Activated CD4-positive, alpha-beta memory T cell treated with anti-CD3 and anti-CD28 coated beads for 36 hours (primary cell): ENCODE measurements at regions of chr6 and their contacts with region 1.

Region 1: GRCh38 chr6:110537208-110538123 is 61.1 kb upstream of the SLC22A16 start:
- DNase-seq: no peak
- H3K4me3 Mint-ChIP-seq: no peak overlapping the region
- H3K27ac Mint-ChIP-seq: peak overlapping the region; percentile 15
- H3K4me1 Mint-ChIP-seq: peaks cover 41% of the 10 kb centered on the region
- H3K27me3 Mint-ChIP-seq: no peaks in the 10 kb centered on the region

Region 2: DNA sequence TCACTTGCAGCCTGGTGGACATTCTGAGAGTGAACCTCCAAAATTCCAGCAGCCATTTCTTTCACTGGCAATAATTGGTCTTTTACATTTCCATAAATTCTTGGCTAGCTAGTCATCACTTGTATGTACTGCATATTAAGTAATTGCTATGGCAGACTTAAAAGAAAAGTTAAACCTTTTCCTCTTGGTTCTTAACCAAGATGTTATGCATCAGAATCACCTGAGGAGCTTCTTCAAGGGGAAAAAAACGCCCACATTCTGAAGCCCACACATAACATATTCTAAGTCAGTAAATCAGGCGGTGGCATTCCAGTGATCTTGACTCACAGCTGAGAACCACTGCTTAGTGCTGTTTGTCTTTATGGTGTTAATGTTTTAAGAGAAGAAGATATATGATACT is 320.2 kb before region 1 on chr6:
- CTCF ChIA-PET with region 1: no interaction called
- POLR2A ChIA-PET with region 1: no interaction called
- intact Hi-C with region 1: no loop called
- DNase-seq: no peak
- H3K4me3 Mint-ChIP-seq: no peak overlapping the region
- H3K27ac Mint-ChIP-seq: no peak overlapping the region
- H3K4me1 Mint-ChIP-seq: no peaks in the 10 kb centered on the region
- H3K27me3 Mint-ChIP-seq: no peaks in the 10 kb centered on the region

Region 3: DNA sequence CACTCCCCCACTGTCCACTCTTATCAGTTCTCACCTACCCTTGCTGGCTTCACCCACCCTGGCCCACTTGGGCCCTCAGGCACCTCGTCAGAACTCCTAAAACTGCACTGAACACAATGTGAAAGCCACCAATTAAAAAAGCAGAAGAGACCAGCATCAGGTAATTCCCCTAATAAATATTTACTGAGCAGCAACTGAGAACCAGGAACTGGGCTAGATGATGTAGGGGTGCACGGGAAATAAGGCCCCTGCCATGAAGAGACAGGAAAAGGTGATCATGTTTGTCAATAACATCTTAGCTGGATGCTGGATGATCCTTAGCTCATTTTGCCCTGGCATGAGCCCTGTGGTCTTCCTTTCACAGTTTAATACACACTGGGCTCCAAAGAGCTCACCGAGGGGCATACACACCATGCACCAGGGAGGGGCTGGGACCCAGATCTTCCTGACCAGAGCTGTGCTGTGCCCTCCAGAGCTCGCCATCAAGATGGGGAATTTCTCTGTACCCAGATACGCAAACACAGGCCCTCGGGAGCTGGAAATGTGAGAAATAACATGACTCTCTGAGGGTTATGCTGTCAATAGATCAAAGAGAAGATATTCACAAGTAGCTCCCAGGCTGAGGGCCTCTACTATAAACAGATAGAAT is 52.5 kb after region 1 on chr6:
- CTCF ChIA-PET with region 1: interaction called, 4 read pairs
- POLR2A ChIA-PET with region 1: interaction called, 4 read pairs
- intact Hi-C with region 1: loop called (anchors 1 kb)
- DNase-seq: peak; percentile 26
- H3K4me3 Mint-ChIP-seq: no peak overlapping the region
- H3K27ac Mint-ChIP-seq: no peak overlapping the region
- H3K4me1 Mint-ChIP-seq: peaks cover 18% of the 10 kb centered on the region
- H3K27me3 Mint-ChIP-seq: no peaks in the 10 kb centered on the region

Region 4: GRCh38 chr6:110646951-110647910 is 109.8 kb after region 1 on chr6:
- CTCF ChIA-PET with region 1: interaction called, 3 read pairs
- POLR2A ChIA-PET with region 1: no interaction called
- intact Hi-C with region 1: loop called (anchors 5 kb)
- DNase-seq: no peak
- H3K4me3 Mint-ChIP-seq: no peak overlapping the region
- H3K27ac Mint-ChIP-seq: no peak overlapping the region
- H3K4me1 Mint-ChIP-seq: peaks cover 8% of the 10 kb centered on the region
- H3K27me3 Mint-ChIP-seq: no peaks in the 10 kb centered on the region